Heart left ventricle (tissue), 16 donors: ENCODE measurements at regions of chr19 and their contacts with region 1.

Region 1: GRCh38 chr19:45092747-45093678 is at the start of gene PPP1R37:
- DNase-seq: peak; percentile 92 to 97 (median 96)
- ATAC-seq: peak; percentile 86 to 94 (median 88)
- H3K4me3 ChIP-seq: peak within 1 kb of the TSS; percentile 65 to 99 (median 96)
- H3K27ac ChIP-seq: peak within 1 kb of the TSS; percentile 21 to 96 (median 89)
- H3K4me1 ChIP-seq: peaks cover 10 to 66% (median 49%) of the 10 kb centered on the region in 12 donors
- H3K27me3 ChIP-seq: no peaks in the 10 kb centered on the region
- CTCF ChIP-seq: peak in 10 of 12 donors; percentile 10 to 55 (median 34)
- POLR2A ChIP-seq: peak in 1 of 2 donors; percentile 34
- total RNA-seq, gene PPP1R37: 16.0 to 33.7 (median 17.1) TPM

Region 2: DNA sequence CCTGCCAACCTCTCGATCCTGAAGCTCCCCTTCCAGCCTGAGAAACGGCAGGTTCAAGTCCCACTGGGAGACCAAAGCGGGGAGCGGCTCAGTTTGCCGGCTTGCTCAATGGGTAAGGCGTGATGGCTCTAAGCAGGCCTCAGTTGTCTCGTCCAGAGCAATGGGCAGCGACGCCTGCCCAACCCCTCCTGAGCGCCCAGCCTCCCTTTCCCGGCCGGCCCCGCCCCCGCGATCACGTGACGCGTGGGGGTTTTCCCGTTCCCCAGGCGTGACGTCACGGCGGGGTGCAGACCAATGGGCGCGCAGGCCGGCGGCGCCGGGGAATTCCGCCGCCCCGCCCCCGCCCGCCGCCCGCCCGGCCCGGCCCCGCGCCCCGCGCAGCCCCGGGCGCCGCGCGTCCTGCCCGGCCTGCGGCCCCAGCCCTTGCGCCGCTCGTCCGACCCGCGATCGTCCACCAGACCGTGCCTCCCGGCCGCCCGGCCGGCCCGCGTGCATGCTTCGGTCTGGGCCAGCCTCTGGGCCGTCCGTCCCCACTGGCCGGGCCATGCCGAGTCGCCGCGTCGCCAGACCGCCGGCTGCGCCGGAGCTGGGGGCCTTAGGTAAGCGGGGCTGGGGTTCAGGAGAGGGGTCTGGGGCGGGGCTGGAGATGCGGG is 91.8 kb before region 1 on chr19 and contains the start of gene RELB:
- intact Hi-C with region 1: loop called in 2 of 10 experiments (anchors 2 to 5 kb)
- DNase-seq: peak; percentile 96 to 98 (median 97)
- ATAC-seq: peak; percentile 28 to 71 (median 62)
- H3K4me3 ChIP-seq: peak within 1 kb of the TSS; percentile 52 to 95 (median 88)
- H3K27ac ChIP-seq: peak within 1 kb of the TSS; percentile 88 to 100 (median 98)
- H3K4me1 ChIP-seq: peaks cover 0 to 14% (median 10%) of the 10 kb centered on the region in 12 donors
- H3K27me3 ChIP-seq: no peaks in the 10 kb centered on the region
- CTCF ChIP-seq: no peak
- POLR2A ChIP-seq: no peak
- total RNA-seq, gene RELB: 2.8 to 23.2 (median 6.7) TPM

Region 3: DNA sequence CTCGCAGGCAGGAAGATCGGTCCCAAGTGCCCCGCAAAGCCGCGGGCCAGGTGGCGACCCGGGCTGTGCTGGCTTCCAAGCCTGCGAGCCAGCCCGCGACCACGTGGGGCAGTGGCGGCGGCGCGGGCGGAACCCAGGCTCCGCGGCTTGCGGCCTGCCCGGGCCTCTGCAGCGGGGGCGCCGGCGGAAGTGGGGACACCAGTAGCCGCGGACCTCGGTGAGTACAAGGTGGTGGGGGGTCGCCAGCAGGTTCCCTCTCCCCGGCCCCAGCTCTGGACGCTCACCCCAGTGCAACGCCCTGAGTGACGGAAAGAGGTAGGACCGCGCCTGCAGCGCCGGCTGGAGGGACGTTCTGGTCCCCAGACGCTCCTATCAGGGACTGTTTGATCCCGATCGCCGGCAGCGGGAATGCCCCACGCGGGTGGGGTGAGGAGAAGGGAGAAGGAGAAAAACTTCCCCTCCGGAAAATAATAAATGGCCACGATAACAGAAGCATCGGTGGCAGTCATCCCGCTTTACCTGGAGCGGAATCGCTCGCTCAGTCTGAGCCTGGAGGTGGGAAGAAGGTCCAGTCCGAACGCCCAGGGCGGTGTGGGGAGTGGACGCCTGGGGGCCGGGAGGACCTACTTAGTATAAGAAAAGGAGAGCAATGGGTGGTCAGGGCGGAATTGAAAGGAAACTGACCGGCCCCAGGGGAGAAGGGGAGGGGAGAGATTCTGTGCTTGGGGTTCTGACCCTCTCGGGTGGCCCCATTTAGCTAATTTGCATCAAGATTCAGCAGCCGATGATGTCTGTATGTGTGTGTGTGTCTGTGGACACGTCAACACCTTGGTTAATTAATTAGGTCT is 13.7 kb before region 1 on chr19 and contains the start of gene GEMIN7:
- intact Hi-C with region 1: loop called in 3 of 10 experiments (anchors 1 to 2 kb)
- DNase-seq: peak; percentile 73 to 86 (median 81)
- ATAC-seq: peak; percentile 77 to 89 (median 87)
- H3K4me3 ChIP-seq: peak within 1 kb of the TSS; percentile 81 to 100 (median 94)
- H3K27ac ChIP-seq: peak within 1 kb of the TSS; percentile 60 to 87 (median 74)
- H3K4me1 ChIP-seq: peaks cover 6 to 47% (median 28%) of the 10 kb centered on the region in 12 donors
- H3K27me3 ChIP-seq: no peaks in the 10 kb centered on the region
- CTCF ChIP-seq: peak in 3 of 12 donors; percentile 12 to 21 (median 16)
- POLR2A ChIP-seq: peak in 1 of 2 donors; percentile 63
- total RNA-seq, gene GEMIN7: 11.4 to 22.0 (median 17.0) TPM

Region 4: GRCh38 chr19:45178262-45179071 is 85.5 kb after region 1 on chr19 and contains the start of gene BLOC1S3:
- intact Hi-C with region 1: loop called in 4 of 10 experiments (anchors 2 to 10 kb)
- DNase-seq: peak; percentile 100
- ATAC-seq: peak; percentile 97 to 99 (median 98)
- H3K4me3 ChIP-seq: peak within 1 kb of the TSS; percentile 54 to 95 (median 84)
- H3K27ac ChIP-seq: peak within 1 kb of the TSS; percentile 14 to 97 (median 88)
- H3K4me1 ChIP-seq: peaks cover 0 to 41% (median 26%) of the 10 kb centered on the region in 12 donors
- H3K27me3 ChIP-seq: no peaks in the 10 kb centered on the region
- CTCF ChIP-seq: peak; percentile 24 to 74 (median 53)
- POLR2A ChIP-seq: peak; percentile 45 to 92
- total RNA-seq, gene BLOC1S3: 2.9 to 8.1 (median 4.8) TPM